ENCODE measurements at regions of chr10 and their contacts with region 1.

Region 1: DNA sequence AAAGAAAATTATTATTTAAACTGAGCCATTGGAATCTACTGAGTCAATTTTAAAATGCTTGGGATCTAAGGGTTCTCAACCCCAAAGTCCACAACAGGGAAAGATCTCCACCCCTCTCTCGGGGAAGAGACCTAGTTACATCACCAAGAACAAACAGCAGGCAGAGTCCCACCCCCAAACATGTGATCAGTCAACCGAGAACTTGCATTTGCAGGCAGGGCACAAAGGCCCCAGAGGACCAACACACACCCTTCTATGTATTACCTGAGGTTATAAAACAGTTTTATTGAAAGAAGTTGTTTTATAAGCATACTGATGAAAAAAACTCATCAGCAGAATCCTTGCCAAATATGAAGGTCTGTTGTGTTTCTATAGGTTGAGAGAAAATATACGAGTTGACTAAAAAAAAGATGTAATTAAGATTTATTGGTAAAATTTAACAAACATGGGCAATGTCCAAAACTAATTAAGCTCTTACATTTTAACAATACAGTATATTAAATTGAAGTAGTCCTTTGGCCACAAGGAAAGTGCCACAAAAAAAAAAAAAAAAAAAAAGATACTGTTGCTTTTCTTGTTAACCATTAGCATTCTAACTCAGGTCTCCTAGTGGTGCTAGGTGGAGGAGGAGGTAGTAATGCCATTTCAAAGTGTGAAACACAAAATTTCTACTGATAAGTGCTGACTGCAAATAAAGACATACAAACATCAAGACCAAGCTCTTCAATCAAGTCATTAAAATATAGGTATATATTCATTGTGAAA is 975 bp upstream of the USP54 start:
- DNase-seq: no peak
- H3K4me3 ChIP-seq: no peak overlapping the region
- H3K4me3 Mint-ChIP-seq: peak overlapping the region in 5 of 7 donors; percentile 19 to 45 (median 30)
- H3K27ac ChIP-seq: peak overlapping the region; percentile 65
- H3K27ac Mint-ChIP-seq: peak overlapping the region in 6 of 8 donors; percentile 31 to 77 (median 48)
- H3K4me1 ChIP-seq: peaks cover 25% of the 10 kb centered on the region
- H3K4me1 Mint-ChIP-seq: peaks cover 16 to 24% (median 21%) of the 10 kb centered on the region in 3 donors
- H3K27me3 ChIP-seq: no peaks in the 10 kb centered on the region
- H3K27me3 Mint-ChIP-seq: no peaks in the 10 kb centered on the region

Region 2: GRCh38 chr10:73413528-73414229 is 178.4 kb before region 1 on chr10 and contains the start of gene ANXA7:
- CTCF ChIA-PET with region 1: no interaction called
- POLR2A ChIA-PET with region 1: interaction called, 11 read pairs
- DNase-seq: peak; percentile 85 to 94 (median 93)
- H3K4me3 ChIP-seq: peak within 1 kb of the TSS; percentile 88
- H3K4me3 Mint-ChIP-seq: peak within 1 kb of the TSS; percentile 91 to 98 (median 96)
- H3K27ac ChIP-seq: peak within 1 kb of the TSS; percentile 94
- H3K27ac Mint-ChIP-seq: peak within 1 kb of the TSS; percentile 44 to 97 (median 95)
- H3K4me1 ChIP-seq: peaks cover 27% of the 10 kb centered on the region
- H3K4me1 Mint-ChIP-seq: peaks cover 43 to 58% (median 58%) of the 10 kb centered on the region in 3 donors
- H3K27me3 ChIP-seq: no peaks in the 10 kb centered on the region
- H3K27me3 Mint-ChIP-seq: peaks cover 0 to 2% of the 10 kb centered on the region in 2 donors
- total RNA-seq, gene ANXA7: 151 to 154 TPM

Region 3: GRCh38 chr10:73614720-73615119 is 22.6 kb after region 1 on chr10:
- CTCF ChIA-PET with region 1: no interaction called
- POLR2A ChIA-PET with region 1: no interaction called
- DNase-seq: no peak
- H3K4me3 ChIP-seq: no peak overlapping the region
- H3K4me3 Mint-ChIP-seq: no peak overlapping the region
- H3K27ac ChIP-seq: no peak overlapping the region
- H3K27ac Mint-ChIP-seq: no peak overlapping the region
- H3K4me1 ChIP-seq: no peaks in the 10 kb centered on the region
- H3K4me1 Mint-ChIP-seq: no peaks in the 10 kb centered on the region
- H3K27me3 ChIP-seq: no peaks in the 10 kb centered on the region
- H3K27me3 Mint-ChIP-seq: no peaks in the 10 kb centered on the region

Region 4: DNA sequence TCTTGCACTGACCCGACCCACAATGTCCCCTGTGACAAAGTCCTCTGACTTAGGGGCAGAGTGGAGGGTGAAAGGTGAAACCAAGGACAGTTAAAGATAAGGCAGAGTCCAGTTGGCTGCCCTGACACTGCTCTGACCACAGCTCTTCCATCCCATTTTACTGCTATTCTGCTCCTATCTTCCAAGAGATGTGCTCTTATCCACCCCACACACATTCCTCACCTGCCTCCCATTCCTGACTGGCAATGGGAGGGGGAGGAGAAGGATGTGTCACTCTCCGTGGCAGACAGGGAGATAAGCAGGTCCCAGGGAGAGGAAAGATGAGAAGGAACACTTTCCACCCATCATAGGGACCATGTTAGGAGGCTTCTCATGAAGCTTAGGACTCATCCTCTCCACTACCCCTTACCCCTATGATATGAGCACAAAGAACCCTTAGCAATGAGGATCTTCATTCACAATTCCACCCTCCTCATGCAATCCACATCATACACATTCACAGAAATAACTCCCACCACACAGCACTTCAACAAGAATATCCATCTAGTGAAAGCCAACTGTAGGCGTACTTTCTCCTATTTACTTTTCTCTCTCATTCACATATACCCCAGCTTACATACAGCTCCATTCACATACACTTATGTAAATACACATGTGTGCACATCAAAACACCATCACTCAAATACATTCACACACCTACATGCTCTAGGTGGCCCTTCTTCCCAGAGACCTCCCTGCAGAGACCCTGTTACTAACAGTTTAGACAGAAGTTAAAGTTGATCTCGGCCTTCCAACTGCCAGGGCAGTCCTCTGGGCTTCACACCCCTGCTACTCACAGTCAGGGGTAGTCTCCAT is 57.1 kb after region 1 on chr10:
- CTCF ChIA-PET with region 1: no interaction called
- POLR2A ChIA-PET with region 1: no interaction called
- DNase-seq: no peak
- H3K4me3 ChIP-seq: no peak overlapping the region
- H3K4me3 Mint-ChIP-seq: peak overlapping the region in 4 of 7 donors; percentile 1 to 65 (median 8)
- H3K27ac ChIP-seq: no peak overlapping the region
- H3K27ac Mint-ChIP-seq: peak overlapping the region in 2 of 8 donors; percentile 35 to 43
- H3K4me1 ChIP-seq: no peaks in the 10 kb centered on the region
- H3K4me1 Mint-ChIP-seq: peaks cover under 1 to 2% (median 2%) of the 10 kb centered on the region in 3 donors
- H3K27me3 ChIP-seq: no peaks in the 10 kb centered on the region
- H3K27me3 Mint-ChIP-seq: peaks cover 5 to 7% of the 10 kb centered on the region in 2 donors

Measured in CD8-positive, alpha-beta memory T cell (primary cell).